PC-9 (cell line): ENCODE measurements at regions of chr4 and their contacts with region 1.

Region 1: DNA sequence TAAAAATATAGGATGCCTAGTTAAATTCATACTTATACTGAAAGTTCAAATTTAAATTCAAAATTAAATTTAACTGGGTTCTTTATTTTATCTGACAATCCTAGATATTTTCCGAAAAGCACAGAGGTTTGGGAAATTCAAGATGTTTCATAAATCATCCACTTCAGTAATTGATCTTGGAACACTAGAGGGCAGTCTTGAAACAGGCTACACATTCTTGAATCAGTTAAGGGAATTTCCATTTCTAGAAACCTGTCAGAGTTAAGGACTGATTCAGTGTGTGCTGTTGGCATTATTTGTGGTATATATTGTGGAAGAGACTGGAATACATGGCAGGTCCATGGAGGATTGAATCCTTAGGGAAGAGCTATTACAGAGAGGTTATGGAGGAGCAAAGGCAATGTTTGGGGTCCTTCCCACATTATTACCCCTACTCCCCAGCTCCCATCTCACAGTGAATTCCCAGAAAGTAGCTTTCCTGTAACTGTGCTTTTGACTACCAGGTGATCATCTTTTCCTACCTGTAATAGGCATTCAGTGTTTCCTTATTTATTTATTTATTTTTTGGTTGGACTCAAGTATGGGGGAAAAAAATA is 92.9 kb downstream of the EGF start:
- DNase-seq: peak in 1 of 2 experiments; percentile 47
- H3K4me3 ChIP-seq: no peak overlapping the region
- H3K27ac ChIP-seq: no peak overlapping the region
- H3K4me1 ChIP-seq: no peaks in the 10 kb centered on the region
- H3K27me3 ChIP-seq: no peaks in the 10 kb centered on the region
- CTCF ChIP-seq: peak; percentile 75

Region 2: GRCh38 chr4:110211007-110211769 is 205.6 kb after region 1 on chr4:
- CTCF ChIA-PET with region 1: no interaction called
- POLR2A ChIA-PET with region 1: no interaction called
- intact Hi-C with region 1: loop called (anchors 5 kb)
- DNase-seq: no peak
- H3K4me3 ChIP-seq: no peak overlapping the region
- H3K27ac ChIP-seq: no peak overlapping the region
- H3K4me1 ChIP-seq: peaks cover 12% of the 10 kb centered on the region; the same call in 1 of the 2 replicates
- H3K27me3 ChIP-seq: no peaks in the 10 kb centered on the region
- CTCF ChIP-seq: peak; percentile 72

Region 3: DNA sequence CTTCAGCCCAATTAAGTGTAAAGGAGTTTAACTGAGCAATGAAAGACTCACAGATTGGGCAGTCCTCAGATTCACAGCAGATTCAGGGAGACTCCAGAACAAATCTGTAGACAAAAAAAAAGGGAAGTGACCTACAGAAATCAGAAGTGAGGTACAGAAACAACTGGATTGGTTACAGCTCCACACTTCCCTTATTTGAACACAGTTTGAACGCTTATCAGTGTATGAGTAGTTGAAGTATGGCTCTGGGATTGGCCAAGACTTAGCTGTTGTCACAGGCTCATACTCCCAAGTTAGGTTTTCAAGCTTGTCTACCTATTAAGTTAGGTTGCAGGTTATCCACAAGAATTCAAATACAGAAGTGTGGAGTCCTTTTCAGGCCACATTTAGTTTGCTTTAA is 305.2 kb after region 1 on chr4:
- CTCF ChIA-PET with region 1: no interaction called
- POLR2A ChIA-PET with region 1: no interaction called
- intact Hi-C with region 1: loop called (anchors 1 kb)
- DNase-seq: no peak
- H3K4me3 ChIP-seq: no peak overlapping the region
- H3K27ac ChIP-seq: no peak overlapping the region
- H3K4me1 ChIP-seq: no peaks in the 10 kb centered on the region
- H3K27me3 ChIP-seq: no peaks in the 10 kb centered on the region
- CTCF ChIP-seq: no peak

Region 4: DNA sequence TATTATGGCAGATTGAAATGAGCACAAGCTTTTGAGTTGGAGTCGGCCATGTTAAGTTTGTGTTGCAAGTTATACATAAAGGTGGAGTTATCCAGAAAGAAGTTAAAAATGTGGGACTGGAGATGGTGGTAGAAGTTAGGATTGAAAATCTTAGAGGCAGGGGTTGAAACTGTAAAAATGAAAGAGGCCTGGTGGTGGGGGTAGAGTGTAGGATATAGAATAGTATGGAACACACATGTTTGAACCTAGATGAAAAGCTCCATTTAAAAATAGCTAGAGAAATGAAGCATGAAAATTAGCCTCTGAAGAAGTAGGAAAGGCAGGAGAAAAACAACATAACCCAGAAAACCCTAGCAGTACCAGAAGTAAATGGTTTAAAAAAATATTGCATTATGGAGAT is 338.6 kb after region 1 on chr4:
- CTCF ChIA-PET with region 1: no interaction called
- POLR2A ChIA-PET with region 1: no interaction called
- intact Hi-C with region 1: loop called (anchors 10 kb)
- DNase-seq: no peak
- H3K4me3 ChIP-seq: no peak overlapping the region
- H3K27ac ChIP-seq: no peak overlapping the region
- H3K4me1 ChIP-seq: no peaks in the 10 kb centered on the region
- H3K27me3 ChIP-seq: no peaks in the 10 kb centered on the region
- CTCF ChIP-seq: peak; percentile 57

Region 5: DNA sequence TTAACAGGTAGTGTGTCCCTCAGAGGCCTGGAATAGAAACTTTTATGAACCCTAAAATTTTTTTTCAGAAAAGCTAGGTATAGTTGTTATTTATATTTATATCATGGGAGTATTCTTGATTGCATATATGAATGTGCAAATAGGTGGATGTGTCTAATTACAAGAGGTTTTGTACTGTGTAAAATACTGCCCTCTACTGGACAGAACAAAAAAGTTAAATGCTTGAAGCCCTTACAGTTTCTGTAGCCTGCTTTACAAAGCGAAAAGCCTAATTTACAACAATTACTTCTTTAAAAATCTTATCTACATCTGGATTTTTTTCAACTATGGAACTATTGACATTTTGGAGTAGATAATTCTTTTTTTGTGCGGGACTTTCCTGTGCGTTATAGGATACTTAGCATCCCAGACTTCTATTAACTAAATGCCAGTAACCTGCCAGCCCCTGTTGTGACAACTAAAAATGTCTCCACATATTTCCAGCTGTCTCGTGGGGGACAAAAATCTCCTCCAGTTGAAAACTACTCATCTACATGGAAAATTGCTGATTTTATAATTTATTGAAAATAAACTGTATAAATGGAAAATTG is 505.5 kb after region 1 on chr4:
- CTCF ChIA-PET with region 1: interaction called, 7 read pairs
- POLR2A ChIA-PET with region 1: no interaction called
- intact Hi-C with region 1: loop called (anchors 1 kb)
- DNase-seq: no peak
- H3K4me3 ChIP-seq: no peak overlapping the region
- H3K27ac ChIP-seq: no peak overlapping the region
- H3K4me1 ChIP-seq: no peaks in the 10 kb centered on the region
- H3K27me3 ChIP-seq: no peaks in the 10 kb centered on the region
- CTCF ChIP-seq: peak; percentile 75

Region 6: GRCh38 chr4:110516106-110516922 is 510.8 kb after region 1 on chr4:
- CTCF ChIA-PET with region 1: no interaction called
- POLR2A ChIA-PET with region 1: no interaction called
- intact Hi-C with region 1: loop called (anchors 1 kb)
- DNase-seq: peak; percentile 64 to 72
- H3K4me3 ChIP-seq: peak overlapping the region; percentile 53; the same call in 1 of the 2 replicates
- H3K27ac ChIP-seq: no peak overlapping the region
- H3K4me1 ChIP-seq: no peaks in the 10 kb centered on the region
- H3K27me3 ChIP-seq: no peaks in the 10 kb centered on the region
- CTCF ChIP-seq: peak; percentile 78

Region 7: DNA sequence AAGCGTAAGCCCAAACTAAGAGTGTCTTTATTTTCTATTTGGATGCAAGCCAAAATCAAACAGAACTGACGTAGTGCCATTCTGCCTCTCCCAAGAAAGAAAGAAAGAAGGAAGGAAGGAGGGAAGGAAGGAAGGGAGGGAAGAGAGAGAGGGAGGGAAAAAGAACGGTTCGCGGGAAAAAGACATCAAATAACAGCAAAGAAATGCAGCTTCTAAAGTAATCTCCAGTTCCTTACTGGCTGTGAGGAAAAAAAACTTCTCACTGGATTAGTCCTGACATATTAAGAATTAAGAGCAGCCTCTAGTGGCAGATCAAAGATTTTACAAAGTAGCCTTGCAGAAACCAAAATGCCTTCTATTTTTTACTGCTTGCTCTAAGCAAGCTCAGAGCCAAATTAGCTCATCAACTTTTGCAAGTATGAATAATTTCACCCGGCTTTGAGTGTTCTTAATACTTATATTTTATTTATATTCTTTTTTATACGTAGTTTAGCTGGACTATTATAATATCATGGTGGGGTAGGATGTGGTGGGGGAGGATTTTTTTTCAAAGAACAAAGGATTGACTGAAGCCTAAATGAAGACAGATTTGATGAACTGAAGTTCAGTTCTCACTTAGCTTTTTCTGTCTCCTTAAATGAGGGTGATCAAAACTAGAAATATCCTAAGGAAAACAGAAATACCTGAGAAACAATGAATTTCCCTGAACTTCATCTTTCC is 580.7 kb after region 1 on chr4:
- CTCF ChIA-PET with region 1: no interaction called
- POLR2A ChIA-PET with region 1: no interaction called
- intact Hi-C with region 1: no loop called
- DNase-seq: peak in 1 of 2 experiments; percentile 42
- H3K4me3 ChIP-seq: no peak overlapping the region
- H3K27ac ChIP-seq: no peak overlapping the region
- H3K4me1 ChIP-seq: no peaks in the 10 kb centered on the region
- H3K27me3 ChIP-seq: no peaks in the 10 kb centered on the region
- CTCF ChIP-seq: peak; percentile 55

Region 8: DNA sequence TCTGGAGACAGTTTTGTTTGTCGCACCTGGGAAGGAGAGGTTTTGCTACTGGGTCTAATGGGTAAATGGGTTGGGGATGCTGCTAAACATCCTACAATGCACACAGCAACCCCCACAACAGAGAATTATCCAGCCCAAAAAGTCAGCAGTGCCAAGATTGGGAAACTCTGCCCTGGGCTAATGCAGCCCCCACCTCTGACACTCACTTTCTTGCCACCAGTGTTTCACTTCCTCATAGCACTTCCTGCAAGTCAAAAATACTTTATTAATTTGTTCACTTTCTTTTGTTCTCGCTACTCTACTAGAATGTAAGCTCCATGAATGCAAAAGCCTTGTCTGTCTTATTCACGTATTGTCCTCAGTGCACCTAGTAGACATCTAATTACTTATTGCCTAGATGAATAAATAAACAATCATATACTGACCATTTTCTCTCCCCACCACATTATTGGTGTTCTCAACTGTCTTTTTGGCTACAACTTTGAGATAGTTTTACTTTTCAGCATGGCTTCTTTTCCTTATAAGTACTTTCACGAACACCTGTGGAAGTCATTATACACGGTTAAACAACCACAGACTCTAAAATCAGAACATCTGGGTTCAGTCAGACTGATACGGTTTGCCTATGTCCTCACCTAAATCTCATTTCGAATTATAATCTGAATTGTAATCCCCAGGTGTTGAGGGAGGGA is 699.3 kb after region 1 on chr4:
- CTCF ChIA-PET with region 1: no interaction called
- POLR2A ChIA-PET with region 1: no interaction called
- intact Hi-C with region 1: no loop called
- DNase-seq: no peak
- H3K4me3 ChIP-seq: no peak overlapping the region
- H3K27ac ChIP-seq: no peak overlapping the region
- H3K4me1 ChIP-seq: no peaks in the 10 kb centered on the region
- H3K27me3 ChIP-seq: no peaks in the 10 kb centered on the region
- CTCF ChIP-seq: no peak

Region 9: GRCh38 chr4:110815950-110816349 is 810.4 kb after region 1 on chr4:
- CTCF ChIA-PET with region 1: no interaction called
- POLR2A ChIA-PET with region 1: no interaction called
- intact Hi-C with region 1: no loop called
- DNase-seq: no peak
- H3K4me3 ChIP-seq: no peak overlapping the region
- H3K27ac ChIP-seq: no peak overlapping the region
- H3K4me1 ChIP-seq: no peaks in the 10 kb centered on the region
- H3K27me3 ChIP-seq: no peaks in the 10 kb centered on the region
- CTCF ChIP-seq: no peak